ENCODE measurements at regions of chr19 and their contacts with region 1.

Region 1: DNA sequence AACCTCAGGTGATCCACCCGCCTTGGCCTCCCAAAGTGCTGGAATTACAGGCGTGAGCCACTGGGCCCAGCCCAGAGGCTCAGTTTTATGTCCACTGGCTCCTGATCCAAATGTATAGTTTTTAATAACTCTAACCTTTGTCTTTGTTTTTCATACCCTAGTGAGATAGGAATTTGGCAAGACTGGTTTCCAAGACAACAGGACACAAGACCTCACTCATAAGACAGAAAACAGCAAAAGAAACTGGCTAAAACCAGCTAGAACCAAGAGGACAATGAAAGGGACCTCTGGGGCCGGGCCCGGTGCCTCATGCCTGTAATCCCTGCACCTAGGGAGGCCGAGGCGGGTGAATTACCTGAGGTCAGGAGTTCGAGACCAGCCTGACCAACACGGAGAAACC is 27.6 kb downstream of the CPT1C start:
- DNase-seq: no peak
- H3K4me3 Mint-ChIP-seq: peak overlapping the region; percentile 38
- H3K27ac Mint-ChIP-seq: peak overlapping the region; percentile 66
- H3K4me1 Mint-ChIP-seq: peaks cover 18% of the 10 kb centered on the region
- H3K27me3 Mint-ChIP-seq: no peaks in the 10 kb centered on the region

Region 2: DNA sequence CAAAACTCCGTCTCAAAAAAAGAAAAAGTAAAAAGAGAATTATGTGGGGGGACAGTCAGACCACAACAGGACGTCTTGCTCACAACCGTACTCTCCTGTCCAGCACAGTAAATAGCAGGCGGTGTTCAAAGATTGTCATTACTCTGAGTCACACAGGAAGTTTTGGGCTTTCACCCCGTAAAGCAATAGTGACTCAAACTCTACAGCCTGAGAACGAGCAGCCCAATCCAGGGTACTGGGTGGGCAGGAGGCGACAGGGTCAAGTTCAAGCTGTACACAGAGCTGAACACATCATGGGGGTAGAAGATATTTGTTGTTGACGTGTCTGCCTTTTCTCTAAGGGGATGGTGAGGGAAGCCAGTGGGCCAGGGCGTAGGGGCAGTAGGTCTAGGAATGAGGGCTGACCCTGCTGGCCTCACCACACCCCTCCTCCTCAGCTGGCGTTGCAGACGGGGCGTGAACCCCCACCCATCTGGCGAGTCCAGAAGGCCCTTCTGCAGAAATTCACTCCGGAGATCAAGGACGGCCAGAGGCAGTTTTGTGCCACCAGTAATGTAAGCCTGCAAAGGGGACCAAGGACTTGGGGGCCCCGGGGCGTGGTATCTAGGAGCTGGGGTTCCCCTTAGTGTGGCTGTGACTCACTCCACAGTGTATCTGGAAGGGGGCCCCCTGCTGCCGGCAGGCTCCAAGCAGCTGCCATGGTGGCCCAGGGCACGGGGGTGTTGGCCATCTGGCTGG is 104.2 kb before region 1 on chr19:
- CTCF ChIA-PET with region 1: no interaction called
- POLR2A ChIA-PET with region 1: no interaction called
- DNase-seq: no peak
- H3K4me3 Mint-ChIP-seq: no peak overlapping the region
- H3K27ac Mint-ChIP-seq: peak overlapping the region; percentile 52
- H3K4me1 Mint-ChIP-seq: peaks cover 11% of the 10 kb centered on the region
- H3K27me3 Mint-ChIP-seq: no peaks in the 10 kb centered on the region

Region 3: GRCh38 chr19:49689129-49690078 is 29.1 kb before region 1 on chr19 and contains the start of gene ADM5:
- CTCF ChIA-PET with region 1: interaction called, 3 read pairs
- POLR2A ChIA-PET with region 1: interaction called, 12 read pairs
- DNase-seq: peak; percentile 31
- H3K4me3 Mint-ChIP-seq: peak within 1 kb of the TSS; percentile 77
- H3K27ac Mint-ChIP-seq: no peak within 1 kb of the TSS
- H3K4me1 Mint-ChIP-seq: peaks cover 27% of the 10 kb centered on the region
- H3K27me3 Mint-ChIP-seq: peaks cover 24% of the 10 kb centered on the region
- total RNA-seq, gene ADM5: 3.7 to 4.9 TPM

Region 4: DNA sequence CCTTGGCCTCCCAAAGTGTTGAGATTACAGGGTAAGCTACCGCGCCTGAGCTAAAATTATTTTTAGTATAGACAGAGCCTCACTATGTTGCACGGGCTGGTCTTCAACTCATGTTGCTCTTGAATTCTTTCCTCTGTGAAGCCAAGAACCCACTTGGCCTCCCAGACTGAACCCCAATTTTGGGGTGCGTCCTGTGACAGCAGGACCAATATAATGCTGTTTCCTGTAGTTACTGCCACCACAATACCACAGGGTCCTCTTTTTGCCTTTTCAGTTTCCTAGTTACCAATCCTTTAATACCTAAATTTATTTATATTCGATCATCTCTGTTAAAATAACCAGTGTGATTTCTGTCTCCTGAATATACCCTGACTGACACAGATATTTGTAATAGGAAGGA is 11.7 kb after region 1 on chr19:
- CTCF ChIA-PET with region 1: interaction called, 13 read pairs
- POLR2A ChIA-PET with region 1: no interaction called
- DNase-seq: no peak
- H3K4me3 Mint-ChIP-seq: no peak overlapping the region
- H3K27ac Mint-ChIP-seq: no peak overlapping the region
- H3K4me1 Mint-ChIP-seq: peaks cover 3% of the 10 kb centered on the region
- H3K27me3 Mint-ChIP-seq: no peaks in the 10 kb centered on the region